WTC11 (cell line): ENCODE measurements at regions of chr3 and their contacts with region 1.

Region 1: GRCh38 chr3:134308350-134308891 is 57.8 kb upstream of the RYK start:
- DNase-seq: peak; percentile 92
- ATAC-seq: peak; percentile 70
- H3K4me3 Mint-ChIP-seq: peak overlapping the region; percentile 7; the same call in 1 of the 2 replicates
- H3K27ac Mint-ChIP-seq: no peak overlapping the region; the same call in 1 of the 2 replicates
- H3K4me1 Mint-ChIP-seq: peaks cover 23% of the 10 kb centered on the region
- H3K27me3 Mint-ChIP-seq: peaks cover 3% of the 10 kb centered on the region
- CTCF ChIP-seq: peak; percentile 100

Region 2: DNA sequence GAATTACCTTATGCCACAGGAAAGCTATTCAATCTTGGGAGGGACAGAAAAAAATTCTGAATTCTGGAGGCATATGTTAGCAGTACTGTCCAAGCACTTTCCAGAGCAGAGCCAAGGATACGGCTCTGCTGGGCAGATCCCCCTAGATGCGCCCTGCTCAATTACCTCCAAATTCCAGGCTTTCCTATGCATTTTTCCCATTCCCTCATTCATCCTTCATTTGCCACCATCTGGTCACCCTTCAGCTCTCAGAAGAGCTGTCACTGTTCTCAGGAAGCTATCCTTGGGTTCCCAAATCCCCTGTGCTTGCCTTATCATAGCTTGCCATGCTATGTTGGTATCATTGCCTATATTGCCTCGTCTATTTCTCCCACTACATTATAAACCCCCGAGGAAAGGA is 103.0 kb before region 1 on chr3:
- CTCF ChIA-PET with region 1: no interaction called
- POLR2A ChIA-PET with region 1: no interaction called
- DNase-seq: no peak
- ATAC-seq: no peak
- H3K4me3 Mint-ChIP-seq: no peak overlapping the region
- H3K27ac Mint-ChIP-seq: no peak overlapping the region
- H3K4me1 Mint-ChIP-seq: peaks cover 8% of the 10 kb centered on the region
- H3K27me3 Mint-ChIP-seq: no peaks in the 10 kb centered on the region
- CTCF ChIP-seq: no peak

Region 3: DNA sequence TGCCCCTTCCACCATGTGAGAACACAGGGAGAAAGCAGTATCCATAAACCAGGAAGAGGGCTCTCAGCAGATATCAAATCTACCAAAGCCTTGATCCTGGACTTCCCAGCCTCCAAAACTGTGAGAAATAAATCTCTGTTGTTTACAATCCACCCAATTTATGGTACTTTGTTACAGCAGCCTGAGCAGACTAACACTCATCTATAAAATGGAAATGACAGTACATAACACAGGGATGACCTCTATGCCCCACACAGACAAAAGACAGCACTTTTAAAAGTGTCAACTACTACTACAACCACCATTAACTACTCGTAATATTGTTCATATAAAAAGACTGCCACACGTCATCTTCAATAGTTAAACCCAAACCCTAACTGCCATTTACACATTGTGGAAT is 63.5 kb before region 1 on chr3:
- CTCF ChIA-PET with region 1: no interaction called
- POLR2A ChIA-PET with region 1: no interaction called
- DNase-seq: no peak
- ATAC-seq: no peak
- H3K4me3 Mint-ChIP-seq: 0 out of 2 replicates have a peak overlapping the region, but pooled peaks have one; percentile 3
- H3K27ac Mint-ChIP-seq: peak overlapping the region; percentile 66
- H3K4me1 Mint-ChIP-seq: peaks cover 70% of the 10 kb centered on the region
- H3K27me3 Mint-ChIP-seq: no peaks in the 10 kb centered on the region
- CTCF ChIP-seq: no peak

Region 4: GRCh38 chr3:134357261-134358184 is 49.1 kb after region 1 on chr3:
- CTCF ChIA-PET with region 1: interaction called, 57 read pairs
- POLR2A ChIA-PET with region 1: interaction called, 4 read pairs
- DNase-seq: peak; percentile 22
- ATAC-seq: peak; percentile 36
- H3K4me3 Mint-ChIP-seq: no peak overlapping the region
- H3K27ac Mint-ChIP-seq: peak overlapping the region; percentile 82
- H3K4me1 Mint-ChIP-seq: peaks cover 29% of the 10 kb centered on the region
- H3K27me3 Mint-ChIP-seq: no peaks in the 10 kb centered on the region
- CTCF ChIP-seq: no peak

Region 5: DNA sequence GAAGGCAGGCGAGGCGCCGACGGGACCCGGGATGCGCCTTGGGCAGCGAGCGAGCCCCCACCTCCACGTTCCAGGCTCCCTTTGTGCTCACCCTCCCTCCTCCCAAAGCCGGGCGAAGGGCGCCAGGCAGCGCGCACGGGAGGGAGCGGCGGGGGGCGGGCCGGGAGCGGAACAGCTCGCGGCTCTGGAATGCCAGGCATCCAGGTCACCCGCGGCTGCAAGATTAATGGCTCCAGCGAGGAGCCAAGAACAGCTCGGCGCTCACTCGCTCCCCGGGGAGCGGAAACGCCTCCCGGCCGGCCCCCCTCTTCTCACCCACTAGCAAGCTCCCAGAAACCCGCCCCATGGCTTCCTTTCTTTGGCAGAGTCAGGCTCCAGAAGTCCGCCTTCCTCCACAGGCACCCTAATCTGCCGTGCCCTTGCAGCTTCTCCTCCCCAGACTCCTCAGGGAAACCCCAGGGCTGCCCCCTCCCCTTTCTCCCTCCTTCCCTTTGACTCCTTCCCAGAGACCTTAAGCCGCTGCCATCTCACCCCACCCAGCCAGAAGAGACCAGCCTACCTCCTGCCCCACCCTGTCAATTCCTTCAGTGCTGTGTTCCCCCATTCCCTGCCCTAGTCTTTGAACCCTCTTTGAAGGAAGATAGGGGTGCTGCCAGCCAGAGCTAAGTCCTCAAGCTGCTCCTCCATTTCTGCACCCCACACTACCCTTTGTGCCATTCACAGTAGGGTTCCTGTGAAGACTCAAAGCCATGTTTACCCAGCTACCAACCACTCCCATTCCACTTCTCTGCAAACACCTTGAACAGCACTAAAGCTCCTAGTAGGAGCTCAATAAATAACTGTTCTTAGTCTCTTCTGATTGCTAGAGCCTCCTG is 55.9 kb after region 1 on chr3:
- CTCF ChIA-PET with region 1: interaction called, 57 read pairs
- POLR2A ChIA-PET with region 1: interaction called, 53 read pairs
- DNase-seq: peak; percentile 96
- ATAC-seq: peak; percentile 73
- H3K4me3 Mint-ChIP-seq: peak overlapping the region; percentile 37
- H3K27ac Mint-ChIP-seq: peak overlapping the region; percentile 96
- H3K4me1 Mint-ChIP-seq: peaks cover 48% of the 10 kb centered on the region
- H3K27me3 Mint-ChIP-seq: no peaks in the 10 kb centered on the region
- CTCF ChIP-seq: no peak

Region 6: DNA sequence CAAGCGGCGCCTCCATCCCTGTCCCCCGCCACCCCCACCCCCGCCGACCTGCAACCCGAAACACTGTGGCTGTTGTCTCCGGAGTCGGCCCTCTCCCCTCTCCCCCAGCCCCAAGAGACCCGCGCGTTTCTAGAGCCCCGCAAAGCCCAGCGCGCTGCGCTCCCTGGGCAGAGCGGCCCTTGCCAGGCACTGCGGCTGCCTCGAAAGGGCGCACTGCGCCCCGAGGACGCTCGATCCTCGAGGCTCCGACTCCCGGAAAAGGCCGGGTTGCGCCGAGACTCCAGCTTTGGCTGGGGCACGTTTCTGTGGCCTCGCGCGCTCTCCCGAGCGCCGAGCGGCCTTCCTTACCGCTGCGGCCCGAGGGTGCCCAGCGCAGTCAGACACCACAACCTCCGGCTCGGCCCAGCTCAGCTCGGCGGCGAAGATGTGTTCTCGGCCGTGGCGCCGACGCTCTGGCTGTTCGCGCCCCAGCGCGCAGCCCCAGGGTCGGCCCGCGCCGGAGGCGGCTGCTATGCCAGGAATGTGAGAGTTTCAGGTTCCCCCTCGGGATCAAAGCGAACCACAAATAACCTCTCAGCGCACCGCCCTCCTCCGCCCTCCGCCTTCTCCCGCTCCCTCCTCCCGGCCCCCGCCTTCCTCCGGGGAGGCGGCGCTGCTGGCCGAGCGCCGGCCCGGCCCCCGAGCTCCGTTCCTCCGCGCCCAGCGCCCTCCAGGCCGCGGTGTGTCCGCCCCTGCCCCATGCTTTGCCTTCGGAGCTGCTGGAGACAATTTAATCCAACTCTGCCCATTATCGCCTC is 65.8 kb after region 1 on chr3 and contains the start of gene AMOTL2:
- CTCF ChIA-PET with region 1: interaction called, 175 read pairs
- POLR2A ChIA-PET with region 1: interaction called, 52 read pairs
- DNase-seq: peak; percentile 95
- ATAC-seq: peak; percentile 65
- H3K4me3 Mint-ChIP-seq: peak within 1 kb of the TSS; percentile 82
- H3K27ac Mint-ChIP-seq: peak within 1 kb of the TSS; percentile 98
- H3K4me1 Mint-ChIP-seq: peaks cover 70% of the 10 kb centered on the region
- H3K27me3 Mint-ChIP-seq: peaks cover 31% of the 10 kb centered on the region
- CTCF ChIP-seq: no peak
- total RNA-seq, gene AMOTL2: 76.9 to 85.4 TPM (median 79.9 TPM) in 3 replicates

Region 7: GRCh38 chr3:134381827-134382442 is 73.5 kb after region 1 on chr3:
- CTCF ChIA-PET with region 1: interaction called, 175 read pairs
- POLR2A ChIA-PET with region 1: interaction called, 5 read pairs
- DNase-seq: no peak
- ATAC-seq: peak; percentile 60
- H3K4me3 Mint-ChIP-seq: no peak overlapping the region
- H3K27ac Mint-ChIP-seq: no peak overlapping the region
- H3K4me1 Mint-ChIP-seq: peaks cover 42% of the 10 kb centered on the region
- H3K27me3 Mint-ChIP-seq: peaks cover 16% of the 10 kb centered on the region
- CTCF ChIP-seq: no peak

Region 8: DNA sequence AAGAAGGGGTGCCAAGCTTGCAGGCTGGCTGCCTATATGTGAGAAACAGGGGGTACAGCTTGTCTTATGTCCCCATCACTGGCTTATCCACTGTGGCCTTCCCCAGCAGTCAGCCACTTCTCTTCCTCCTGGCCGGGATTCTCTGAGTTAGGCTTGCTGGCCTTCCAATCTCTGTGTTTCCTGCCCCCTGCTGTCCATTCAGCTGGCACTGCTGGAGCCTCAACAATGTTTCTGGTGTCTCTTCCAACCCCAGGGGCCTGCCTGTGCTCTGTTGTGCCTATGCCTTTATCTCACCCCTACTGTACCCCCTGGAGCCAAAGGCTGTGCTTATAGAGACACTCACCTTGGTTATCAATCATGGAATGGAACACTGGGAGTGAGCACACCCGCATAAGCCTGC is 140.9 kb after region 1 on chr3:
- CTCF ChIA-PET with region 1: interaction called, 32 read pairs
- POLR2A ChIA-PET with region 1: no interaction called
- DNase-seq: peak; percentile 64
- ATAC-seq: peak; percentile 76
- H3K4me3 Mint-ChIP-seq: no peak overlapping the region
- H3K27ac Mint-ChIP-seq: no peak overlapping the region
- H3K4me1 Mint-ChIP-seq: peaks cover 20% of the 10 kb centered on the region
- H3K27me3 Mint-ChIP-seq: peaks cover 23% of the 10 kb centered on the region
- CTCF ChIP-seq: no peak